Activated CD4-positive, alpha-beta T cell treated with anti-CD3 and anti-CD28 coated beads for 36 hours (primary cell): ENCODE measurements at regions of chr9 and their contacts with region 1.

Region 1: GRCh38 chr9:32550562-32551433 is 1.3 kb upstream of the SMIM27 start:
- DNase-seq: peak; percentile 95
- ATAC-seq: peak; percentile 74
- H3K4me3 Mint-ChIP-seq: peak overlapping the region; percentile 96
- H3K27ac Mint-ChIP-seq: peak overlapping the region; percentile 99
- H3K4me1 Mint-ChIP-seq: peaks cover 47% of the 10 kb centered on the region
- H3K27me3 Mint-ChIP-seq: no peaks in the 10 kb centered on the region

Region 2: DNA sequence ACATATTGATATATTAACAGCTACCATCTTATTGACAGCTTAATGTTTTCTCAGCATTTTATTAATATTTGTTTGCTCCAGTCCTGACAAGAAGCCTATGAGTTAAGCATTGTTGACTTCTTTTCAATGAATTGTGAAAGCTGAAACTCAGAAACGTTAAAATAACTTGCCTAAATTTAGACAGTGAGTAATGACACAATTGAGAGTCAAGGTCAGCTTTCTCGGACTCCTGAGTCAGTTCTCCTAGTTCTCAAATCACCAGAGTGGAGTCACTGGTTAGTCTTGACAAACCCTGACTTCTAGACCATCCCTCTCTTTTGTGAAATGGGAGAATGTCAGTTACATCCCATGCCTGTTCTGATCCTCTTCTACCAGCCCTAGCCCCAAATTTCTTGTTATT is 389.1 kb before region 1 on chr9:
- CTCF ChIA-PET with region 1: no interaction called
- POLR2A ChIA-PET with region 1: no interaction called
- intact Hi-C with region 1: no loop called
- DNase-seq: no peak
- ATAC-seq: no peak
- H3K4me3 Mint-ChIP-seq: no peak overlapping the region
- H3K27ac Mint-ChIP-seq: no peak overlapping the region
- H3K4me1 Mint-ChIP-seq: no peaks in the 10 kb centered on the region
- H3K27me3 Mint-ChIP-seq: no peaks in the 10 kb centered on the region

Region 3: DNA sequence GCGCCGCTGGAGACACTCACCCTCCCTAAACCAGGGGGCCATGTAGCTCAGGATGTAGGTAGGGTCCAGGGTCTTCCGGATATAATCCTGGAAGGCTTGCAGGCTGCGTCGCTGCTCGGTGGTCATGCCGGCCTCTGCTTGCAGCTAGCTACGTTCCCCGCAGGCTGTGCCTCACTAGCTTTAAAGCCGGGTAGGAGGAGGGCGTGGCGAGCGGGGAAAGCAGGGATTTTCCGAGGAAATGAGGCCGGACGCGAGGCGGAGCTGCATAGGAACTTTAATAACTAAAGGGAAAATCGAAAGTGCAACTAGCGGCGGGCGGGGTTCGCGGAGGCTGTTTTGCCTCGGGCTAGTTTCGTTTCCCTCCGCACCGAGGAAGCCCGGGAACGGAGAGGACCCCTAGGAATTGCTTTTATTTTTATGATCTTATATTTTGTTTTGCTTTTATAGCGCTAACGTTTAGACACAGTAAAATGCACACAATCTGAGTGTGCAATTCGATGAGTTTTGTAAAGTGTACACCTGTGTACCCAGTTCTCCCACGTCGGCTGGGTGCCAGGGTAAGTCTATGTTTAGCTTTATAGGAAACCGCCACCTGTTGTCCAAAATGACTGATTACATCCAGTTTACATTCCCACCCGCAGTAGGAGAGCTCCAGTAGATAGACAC is 24.6 kb before region 1 on chr9 and contains the start of gene RIGI:
- CTCF ChIA-PET with region 1: interaction called, 25 read pairs
- POLR2A ChIA-PET with region 1: interaction called, 9 read pairs
- intact Hi-C with region 1: loop called (anchors 1 kb)
- DNase-seq: peak; percentile 86
- ATAC-seq: peak; percentile 78
- H3K4me3 Mint-ChIP-seq: peak within 1 kb of the TSS; percentile 80
- H3K27ac Mint-ChIP-seq: peak within 1 kb of the TSS; percentile 90
- H3K4me1 Mint-ChIP-seq: peaks cover 41% of the 10 kb centered on the region
- H3K27me3 Mint-ChIP-seq: no peaks in the 10 kb centered on the region
- total RNA-seq, gene RIGI: 8.9 to 9.7 TPM

Region 4: GRCh38 chr9:32589083-32589723 is 38.4 kb after region 1 on chr9:
- CTCF ChIA-PET with region 1: no interaction called
- POLR2A ChIA-PET with region 1: no interaction called
- intact Hi-C with region 1: no loop called
- DNase-seq: no peak
- ATAC-seq: peak; percentile 63
- H3K4me3 Mint-ChIP-seq: no peak overlapping the region
- H3K27ac Mint-ChIP-seq: no peak overlapping the region
- H3K4me1 Mint-ChIP-seq: no peaks in the 10 kb centered on the region
- H3K27me3 Mint-ChIP-seq: peaks cover 18% of the 10 kb centered on the region

Region 5: DNA sequence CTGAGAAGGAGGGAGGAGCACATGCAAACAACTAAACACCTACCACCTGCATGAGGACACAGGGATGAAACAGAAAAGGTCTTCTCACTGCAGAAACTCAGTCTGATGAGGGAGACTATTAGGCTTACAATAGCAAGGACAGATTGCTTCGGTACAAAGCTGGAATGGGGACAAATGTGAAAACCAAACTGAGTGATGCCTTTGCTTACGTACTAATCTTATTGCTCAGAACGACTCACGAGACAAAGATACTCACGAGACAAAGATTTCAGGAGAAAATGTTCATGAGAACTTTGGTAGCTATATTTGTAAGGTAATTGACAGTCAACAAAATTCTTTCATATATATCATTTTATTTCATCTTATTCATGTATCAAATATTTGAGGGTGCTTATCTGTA is 156.5 kb after region 1 on chr9:
- CTCF ChIA-PET with region 1: no interaction called
- POLR2A ChIA-PET with region 1: no interaction called
- intact Hi-C with region 1: no loop called
- DNase-seq: no peak
- ATAC-seq: no peak
- H3K4me3 Mint-ChIP-seq: no peak overlapping the region
- H3K27ac Mint-ChIP-seq: no peak overlapping the region
- H3K4me1 Mint-ChIP-seq: no peaks in the 10 kb centered on the region
- H3K27me3 Mint-ChIP-seq: peaks cover 11% of the 10 kb centered on the region

Region 6: GRCh38 chr9:33024966-33025571 is 474.3 kb after region 1 on chr9 and contains the start of gene DNAJA1:
- CTCF ChIA-PET with region 1: no interaction called
- POLR2A ChIA-PET with region 1: interaction called, 6 read pairs
- intact Hi-C with region 1: loop called in 1 of 2 experiments (anchors 1 kb)
- DNase-seq: peak; percentile 97
- ATAC-seq: peak; percentile 82
- H3K4me3 Mint-ChIP-seq: peak within 1 kb of the TSS; percentile 98
- H3K27ac Mint-ChIP-seq: peak within 1 kb of the TSS; percentile 94
- H3K4me1 Mint-ChIP-seq: peaks cover 59% of the 10 kb centered on the region
- H3K27me3 Mint-ChIP-seq: no peaks in the 10 kb centered on the region
- total RNA-seq, gene DNAJA1: 198 to 266 TPM

Region 7: GRCh38 chr9:33264473-33265177 is 713.8 kb after region 1 on chr9 and contains the starts of genes BAG1 and CHMP5:
- CTCF ChIA-PET with region 1: no interaction called
- POLR2A ChIA-PET with region 1: no interaction called
- intact Hi-C with region 1: loop called in 1 of 2 experiments (anchors 1 kb)
- DNase-seq: peak; percentile 100
- ATAC-seq: peak; percentile 96
- H3K4me3 Mint-ChIP-seq: peak within 1 kb of the TSS; percentile 97
- H3K27ac Mint-ChIP-seq: peak within 1 kb of the TSS; percentile 99
- H3K4me1 Mint-ChIP-seq: peaks cover 51% of the 10 kb centered on the region
- H3K27me3 Mint-ChIP-seq: no peaks in the 10 kb centered on the region
- total RNA-seq, gene BAG1: 47.9 to 65.8 TPM
- total RNA-seq, gene CHMP5: 102 to 106 TPM

Region 8: GRCh38 chr9:33649463-33649862 is 1098.7 kb after region 1 on chr9:
- CTCF ChIA-PET with region 1: no interaction called
- POLR2A ChIA-PET with region 1: no interaction called
- intact Hi-C with region 1: no loop called
- DNase-seq: no peak
- ATAC-seq: no peak
- H3K4me3 Mint-ChIP-seq: no peak overlapping the region
- H3K27ac Mint-ChIP-seq: no peak overlapping the region
- H3K4me1 Mint-ChIP-seq: peaks cover 2% of the 10 kb centered on the region
- H3K27me3 Mint-ChIP-seq: peaks cover 29% of the 10 kb centered on the region